Naive thymus-derived CD4-positive, alpha-beta T cell (primary cell): ENCODE measurements at regions of chr9 and their contacts with region 1.

Region 1: GRCh38 chr9:70924895-70925547 is 196.4 kb downstream of the TRPM3 start:
- DNase-seq: peak in 1 of 9 donors; percentile 13
- ATAC-seq: no peak
- H3K4me3 ChIP-seq: no peak overlapping the region
- H3K4me3 Mint-ChIP-seq: no peak overlapping the region
- H3K27ac ChIP-seq: no peak overlapping the region
- H3K27ac Mint-ChIP-seq: no peak overlapping the region
- H3K4me1 ChIP-seq: no peaks in the 10 kb centered on the region
- H3K4me1 Mint-ChIP-seq: no peaks in the 10 kb centered on the region
- H3K27me3 ChIP-seq: no peaks in the 10 kb centered on the region
- H3K27me3 Mint-ChIP-seq: peaks cover 0 to 6% (median 0%) of the 10 kb centered on the region in 5 donors

Region 2: GRCh38 chr9:70987986-70988385 is 63.0 kb after region 1 on chr9:
- CTCF ChIA-PET with region 1: no interaction called
- POLR2A ChIA-PET with region 1: no interaction called
- intact Hi-C with region 1: loop called in 1 of 2 experiments (anchors 10 kb)
- DNase-seq: no peak
- ATAC-seq: no peak
- H3K4me3 ChIP-seq: no peak overlapping the region
- H3K4me3 Mint-ChIP-seq: no peak overlapping the region
- H3K27ac ChIP-seq: no peak overlapping the region
- H3K27ac Mint-ChIP-seq: no peak overlapping the region
- H3K4me1 ChIP-seq: no peaks in the 10 kb centered on the region
- H3K4me1 Mint-ChIP-seq: no peaks in the 10 kb centered on the region
- H3K27me3 ChIP-seq: no peaks in the 10 kb centered on the region
- H3K27me3 Mint-ChIP-seq: peaks cover 0 to 13% (median 0%) of the 10 kb centered on the region in 5 donors